ENCODE measurements at regions of chr17 and their contacts with region 1.

Region 1: DNA sequence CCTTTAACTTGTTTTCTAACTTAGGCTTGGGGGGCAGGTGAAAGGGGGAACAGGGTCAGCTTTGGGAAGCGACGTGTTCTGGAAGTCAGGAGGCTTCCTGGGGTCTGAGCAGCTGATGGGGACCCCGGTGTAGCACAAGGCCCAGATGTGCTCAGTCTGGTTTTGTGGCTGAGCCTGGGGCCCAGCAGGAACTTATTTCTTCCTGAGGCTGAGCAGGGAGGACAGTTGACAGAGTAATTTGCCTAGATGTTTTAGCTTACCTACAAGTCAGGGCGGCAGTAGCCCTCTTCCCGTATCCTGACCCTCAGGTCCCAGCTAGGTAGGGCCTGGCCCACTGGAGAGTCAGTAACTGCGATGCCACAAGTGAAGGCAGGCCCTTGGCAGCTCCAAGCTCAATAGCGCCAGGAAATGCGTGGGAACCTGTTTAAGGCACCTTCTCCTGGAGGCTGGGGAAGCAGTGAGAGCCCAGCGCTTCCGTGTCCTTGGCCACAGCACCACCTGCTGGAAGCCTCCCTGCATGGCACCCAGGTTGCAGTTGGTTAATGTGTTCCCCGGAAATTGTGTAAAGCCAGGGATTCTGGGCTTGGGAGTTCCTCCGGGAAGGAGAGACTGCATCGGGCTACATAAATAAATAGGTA is 5.2 kb downstream of the CCR7 start:
- DNase-seq: peak; percentile 79 to 98
- H3K4me3 ChIP-seq: no peak overlapping the region
- H3K27ac ChIP-seq: no peak overlapping the region
- H3K4me1 ChIP-seq: peaks cover 0 to 5% (median 2%) of the 10 kb centered on the region in 4 experiments; a peak in 5 of 7 replicates
- H3K27me3 ChIP-seq: no peaks in the 10 kb centered on the region; a peak in 1 of 7 replicates
- CTCF ChIP-seq: peak; percentile 97 to 99 (median 97)
- EP300 ChIP-seq: no peak
- POLR2A ChIP-seq: no peak
- RAD21 ChIP-seq: peak; percentile 98 to 99

Region 2: GRCh38 chr17:40362696-40363110 is 197.4 kb before region 1 on chr17:
- CTCF ChIA-PET with region 1: interaction called, 25 read pairs
- POLR2A ChIA-PET with region 1: no interaction called
- DNase-seq: peak in 1 of 2 experiments; percentile 94
- H3K4me3 ChIP-seq: peak overlapping the region; percentile 21 to 65 (median 42); a peak in 7 of 8 replicates
- H3K27ac ChIP-seq: no peak overlapping the region
- H3K4me1 ChIP-seq: peaks cover 6 to 34% (median 23%) of the 10 kb centered on the region in 4 experiments
- H3K27me3 ChIP-seq: peaks cover 8 to 27% (median 24%) of the 10 kb centered on the region in 4 experiments
- CTCF ChIP-seq: peak; percentile 81 to 96 (median 86)
- EP300 ChIP-seq: no peak
- POLR2A ChIP-seq: no peak
- RAD21 ChIP-seq: peak; percentile 73 to 78

Region 3: GRCh38 chr17:40450175-40450574 is 109.9 kb before region 1 on chr17:
- CTCF ChIA-PET with region 1: interaction called, 14 read pairs
- POLR2A ChIA-PET with region 1: interaction called, 3 read pairs
- DNase-seq: peak; percentile 49 to 81
- H3K4me3 ChIP-seq: no peak overlapping the region
- H3K27ac ChIP-seq: no peak overlapping the region
- H3K4me1 ChIP-seq: peaks cover 2 to 11% (median 7%) of the 10 kb centered on the region in 4 experiments; a peak in 5 of 7 replicates
- H3K27me3 ChIP-seq: no peaks in the 10 kb centered on the region
- CTCF ChIP-seq: peak; percentile 57 to 66 (median 60)
- EP300 ChIP-seq: no peak
- POLR2A ChIP-seq: no peak
- RAD21 ChIP-seq: peak; percentile 26 to 44; a peak in 3 of 4 replicates

Region 4: DNA sequence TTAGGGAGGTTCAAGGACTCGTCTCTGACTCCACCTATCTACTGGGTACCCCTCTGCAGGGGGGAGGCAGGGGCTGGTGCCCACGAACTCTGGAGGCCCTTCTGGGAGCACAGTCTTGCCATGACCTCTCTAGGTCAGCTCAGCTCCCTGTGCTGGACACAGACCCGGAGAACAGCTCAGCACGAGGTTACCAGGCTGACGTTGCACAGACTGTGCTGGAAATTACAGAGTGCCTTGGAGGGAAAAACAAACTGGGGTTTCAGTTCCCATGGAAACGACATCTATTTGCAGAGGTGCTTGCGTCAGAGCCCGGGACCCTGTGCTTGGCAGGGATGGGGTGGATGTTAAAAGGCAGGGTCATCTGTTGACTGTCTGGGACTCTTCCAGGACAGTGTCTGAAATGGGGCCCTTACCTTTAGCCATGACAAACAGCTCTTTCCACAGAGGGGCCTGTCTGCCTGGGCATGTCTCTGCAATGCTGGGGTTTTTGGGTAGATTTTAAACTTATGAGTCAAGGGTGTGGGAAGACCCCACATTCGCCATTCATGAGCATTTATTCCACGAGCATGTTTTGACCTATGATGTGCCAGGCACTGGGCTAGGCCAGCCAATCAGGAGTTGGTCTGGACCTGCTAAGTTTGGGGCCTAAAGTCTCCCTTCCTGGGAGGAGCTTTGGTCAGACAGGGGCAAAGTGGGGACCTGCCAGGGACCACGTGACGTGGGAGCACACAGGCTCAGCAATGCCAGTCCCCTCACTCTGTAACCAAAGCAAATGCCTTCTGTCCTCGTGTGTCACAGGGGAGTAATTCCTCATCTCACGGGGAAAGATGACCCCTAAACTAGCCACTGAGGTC is 17.3 kb before region 1 on chr17:
- CTCF ChIA-PET with region 1: interaction called, 58 read pairs
- POLR2A ChIA-PET with region 1: interaction called, 5 read pairs
- DNase-seq: no peak
- H3K4me3 ChIP-seq: no peak overlapping the region
- H3K27ac ChIP-seq: no peak overlapping the region
- H3K4me1 ChIP-seq: peaks cover 2 to 14% (median 6%) of the 10 kb centered on the region in 4 experiments; a peak in 6 of 7 replicates
- H3K27me3 ChIP-seq: no peaks in the 10 kb centered on the region; a peak in 1 of 7 replicates
- CTCF ChIP-seq: no peak
- EP300 ChIP-seq: no peak
- POLR2A ChIP-seq: no peak
- RAD21 ChIP-seq: no peak

Region 5: GRCh38 chr17:40625311-40625710 is 65.2 kb after region 1 on chr17:
- CTCF ChIA-PET with region 1: no interaction called
- POLR2A ChIA-PET with region 1: no interaction called
- DNase-seq: no peak
- H3K4me3 ChIP-seq: no peak overlapping the region
- H3K27ac ChIP-seq: no peak overlapping the region
- H3K4me1 ChIP-seq: no peaks in the 10 kb centered on the region; a peak in 1 of 7 replicates
- H3K27me3 ChIP-seq: no peaks in the 10 kb centered on the region
- CTCF ChIP-seq: no peak
- EP300 ChIP-seq: no peak
- POLR2A ChIP-seq: no peak
- RAD21 ChIP-seq: no peak